MCF 10A (cell line): ENCODE measurements at regions of chr2 and their contacts with region 1.

Region 1: GRCh38 chr2:33275689-33276444 is 200.6 kb upstream of the RASGRP3 start:
- DNase-seq: peak; percentile 93
- H3K4me3 Mint-ChIP-seq: peak overlapping the region; percentile 54
- H3K27ac Mint-ChIP-seq: peak overlapping the region; percentile 76
- H3K4me1 Mint-ChIP-seq: peaks cover 11% of the 10 kb centered on the region
- H3K27me3 Mint-ChIP-seq: no peaks in the 10 kb centered on the region
- CTCF ChIP-seq: no peak

Region 2: GRCh38 chr2:33042265-33042664 is 233.6 kb before region 1 on chr2:
- CTCF ChIA-PET with region 1: interaction called, 15 read pairs
- POLR2A ChIA-PET with region 1: no interaction called
- intact Hi-C with region 1: no loop called
- DNase-seq: no peak
- H3K4me3 Mint-ChIP-seq: no peak overlapping the region
- H3K27ac Mint-ChIP-seq: no peak overlapping the region
- H3K4me1 Mint-ChIP-seq: no peaks in the 10 kb centered on the region
- H3K27me3 Mint-ChIP-seq: no peaks in the 10 kb centered on the region
- CTCF ChIP-seq: no peak

Region 3: GRCh38 chr2:33292063-33292462 is 16.2 kb after region 1 on chr2:
- CTCF ChIA-PET with region 1: no interaction called
- POLR2A ChIA-PET with region 1: no interaction called
- intact Hi-C with region 1: no loop called
- DNase-seq: no peak
- H3K4me3 Mint-ChIP-seq: no peak overlapping the region
- H3K27ac Mint-ChIP-seq: peak overlapping the region; percentile 70
- H3K4me1 Mint-ChIP-seq: peaks cover 22% of the 10 kb centered on the region
- H3K27me3 Mint-ChIP-seq: no peaks in the 10 kb centered on the region
- CTCF ChIP-seq: no peak

Region 4: GRCh38 chr2:33380001-33380609 is 104.2 kb after region 1 on chr2:
- CTCF ChIA-PET with region 1: interaction called, 3 read pairs
- POLR2A ChIA-PET with region 1: no interaction called
- intact Hi-C with region 1: loop called (anchors 5 kb)
- DNase-seq: peak; percentile 18
- H3K4me3 Mint-ChIP-seq: no peak overlapping the region
- H3K27ac Mint-ChIP-seq: no peak overlapping the region
- H3K4me1 Mint-ChIP-seq: no peaks in the 10 kb centered on the region
- H3K27me3 Mint-ChIP-seq: no peaks in the 10 kb centered on the region
- CTCF ChIP-seq: peak; percentile 82

Region 5: GRCh38 chr2:33395655-33396249 is 119.9 kb after region 1 on chr2:
- CTCF ChIA-PET with region 1: no interaction called
- POLR2A ChIA-PET with region 1: no interaction called
- intact Hi-C with region 1: no loop called
- DNase-seq: peak; percentile 72
- H3K4me3 Mint-ChIP-seq: no peak overlapping the region
- H3K27ac Mint-ChIP-seq: no peak overlapping the region
- H3K4me1 Mint-ChIP-seq: no peaks in the 10 kb centered on the region
- H3K27me3 Mint-ChIP-seq: no peaks in the 10 kb centered on the region
- CTCF ChIP-seq: peak; percentile 35

Region 6: DNA sequence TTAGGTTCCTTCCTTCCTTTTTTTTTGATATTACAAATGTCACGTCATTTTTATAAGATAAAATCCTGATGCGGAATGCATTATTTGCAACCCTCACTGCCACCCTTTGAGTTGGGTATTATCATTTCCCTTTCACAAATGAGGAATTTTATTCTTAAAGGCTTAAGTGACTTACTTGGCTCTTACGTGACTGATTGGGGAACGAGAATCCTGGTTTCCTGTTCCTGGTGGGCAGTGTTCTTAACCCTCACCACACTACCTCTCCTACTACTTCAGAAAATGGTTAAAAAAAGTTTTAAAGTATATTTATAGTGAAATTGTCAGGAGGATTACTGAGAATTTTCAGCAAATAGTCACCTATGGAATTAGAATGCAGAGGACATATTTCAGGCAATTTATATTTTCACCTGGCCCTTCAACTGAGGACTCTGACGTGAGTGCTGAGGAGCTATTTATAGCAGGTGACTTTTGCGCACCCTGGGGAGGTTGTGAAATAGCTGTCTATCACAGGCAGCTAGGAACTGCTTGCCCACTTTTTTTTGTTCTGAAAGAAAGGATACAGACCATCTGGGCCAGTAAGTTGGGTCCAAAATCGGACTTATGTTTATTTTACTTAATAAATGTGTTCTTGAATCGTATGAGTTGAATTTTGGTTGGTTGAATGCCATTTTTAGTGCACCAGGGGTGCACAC is 181.8 kb after region 1 on chr2:
- CTCF ChIA-PET with region 1: no interaction called
- POLR2A ChIA-PET with region 1: no interaction called
- intact Hi-C with region 1: no loop called
- DNase-seq: peak; percentile 48
- H3K4me3 Mint-ChIP-seq: no peak overlapping the region
- H3K27ac Mint-ChIP-seq: no peak overlapping the region
- H3K4me1 Mint-ChIP-seq: no peaks in the 10 kb centered on the region
- H3K27me3 Mint-ChIP-seq: no peaks in the 10 kb centered on the region
- CTCF ChIP-seq: no peak